Natural killer cell (primary cell): ENCODE measurements at regions of chr3 and their contacts with region 1.

Region 1: GRCh38 chr3:55343486-55344357 is 143.4 kb downstream of the WNT5A start:
- DNase-seq: no peak
- ATAC-seq: no peak
- H3K4me3 ChIP-seq: no peak overlapping the region
- H3K4me3 Mint-ChIP-seq: no peak overlapping the region
- H3K27ac ChIP-seq: no peak overlapping the region
- H3K27ac Mint-ChIP-seq: no peak overlapping the region
- H3K4me1 ChIP-seq: no peaks in the 10 kb centered on the region
- H3K4me1 Mint-ChIP-seq: no peaks in the 10 kb centered on the region
- H3K27me3 ChIP-seq: no peaks in the 10 kb centered on the region
- H3K27me3 Mint-ChIP-seq: no peaks in the 10 kb centered on the region
- CTCF ChIP-seq: no peak

Region 2: DNA sequence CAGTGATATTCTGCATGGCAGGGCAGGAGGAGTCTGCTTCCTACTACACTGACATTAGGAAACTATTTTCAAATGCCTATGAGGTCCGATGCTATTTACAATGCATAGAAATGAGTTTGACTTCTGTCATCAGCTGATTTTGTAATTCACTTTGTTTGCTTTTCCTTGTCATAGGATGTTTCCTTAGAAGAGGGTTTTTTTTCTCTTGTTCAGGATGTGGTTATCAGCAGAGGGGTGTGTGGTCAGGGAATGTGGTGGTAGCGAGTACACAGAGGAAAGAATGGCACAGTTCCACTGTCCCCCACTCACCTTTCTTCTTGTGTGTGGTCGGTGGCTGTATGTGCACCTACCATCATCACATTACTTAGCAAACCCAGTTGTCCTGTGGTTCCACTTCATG is 647.4 kb before region 1 on chr3:
- intact Hi-C with region 1: no loop called
- DNase-seq: no peak
- ATAC-seq: no peak
- H3K4me3 ChIP-seq: no peak overlapping the region
- H3K4me3 Mint-ChIP-seq: no peak overlapping the region
- H3K27ac ChIP-seq: no peak overlapping the region
- H3K27ac Mint-ChIP-seq: no peak overlapping the region
- H3K4me1 ChIP-seq: no peaks in the 10 kb centered on the region
- H3K4me1 Mint-ChIP-seq: no peaks in the 10 kb centered on the region
- H3K27me3 ChIP-seq: no peaks in the 10 kb centered on the region
- H3K27me3 Mint-ChIP-seq: no peaks in the 10 kb centered on the region
- CTCF ChIP-seq: no peak

Region 3: GRCh38 chr3:55305696-55306485 is 37.8 kb before region 1 on chr3:
- intact Hi-C with region 1: loop called (anchors 1 kb)
- DNase-seq: no peak
- ATAC-seq: no peak
- H3K4me3 ChIP-seq: no peak overlapping the region
- H3K4me3 Mint-ChIP-seq: no peak overlapping the region
- H3K27ac ChIP-seq: no peak overlapping the region
- H3K27ac Mint-ChIP-seq: no peak overlapping the region
- H3K4me1 ChIP-seq: no peaks in the 10 kb centered on the region
- H3K4me1 Mint-ChIP-seq: no peaks in the 10 kb centered on the region
- H3K27me3 ChIP-seq: no peaks in the 10 kb centered on the region
- H3K27me3 Mint-ChIP-seq: no peaks in the 10 kb centered on the region
- CTCF ChIP-seq: no peak

Region 4: DNA sequence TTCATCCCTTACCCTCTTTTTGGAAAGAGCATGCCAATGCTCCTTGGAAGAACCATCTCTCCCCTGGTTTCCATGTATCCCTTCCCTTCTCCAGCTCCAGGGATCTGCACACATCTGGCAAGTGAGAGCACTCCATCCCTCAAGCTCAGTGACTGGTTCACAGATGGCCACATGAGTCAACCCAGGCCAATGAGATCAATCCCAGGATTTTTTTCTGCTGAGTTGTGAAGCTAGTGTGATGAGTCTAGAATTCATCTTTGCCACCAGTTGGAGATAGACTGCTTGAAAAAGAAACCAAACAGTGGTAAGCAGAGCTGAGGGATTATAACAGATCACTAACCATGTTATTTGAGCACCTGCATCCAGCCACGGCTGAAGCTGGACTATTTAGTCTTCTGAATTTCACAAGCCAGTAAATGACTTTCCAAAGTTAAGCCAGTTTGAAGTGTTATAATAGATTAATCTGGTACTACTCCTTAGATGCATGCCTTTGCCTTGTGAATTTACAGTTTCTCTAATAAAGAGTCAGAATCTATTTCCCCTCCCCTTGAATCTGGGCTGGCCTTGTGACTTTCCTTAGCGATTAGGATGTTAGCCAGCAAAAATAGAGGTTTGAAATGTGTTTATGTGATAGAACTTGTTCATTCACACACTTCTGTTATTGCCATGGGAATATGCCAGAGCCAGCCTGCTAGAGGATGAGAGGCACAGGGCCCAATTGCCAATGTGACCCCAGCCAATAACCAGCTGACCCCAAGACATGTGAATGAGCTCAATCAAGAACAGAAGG is 16.4 kb before region 1 on chr3:
- intact Hi-C with region 1: no loop called
- DNase-seq: no peak
- ATAC-seq: no peak
- H3K4me3 ChIP-seq: no peak overlapping the region
- H3K4me3 Mint-ChIP-seq: no peak overlapping the region
- H3K27ac ChIP-seq: no peak overlapping the region
- H3K27ac Mint-ChIP-seq: no peak overlapping the region
- H3K4me1 ChIP-seq: no peaks in the 10 kb centered on the region
- H3K4me1 Mint-ChIP-seq: no peaks in the 10 kb centered on the region
- H3K27me3 ChIP-seq: no peaks in the 10 kb centered on the region
- H3K27me3 Mint-ChIP-seq: no peaks in the 10 kb centered on the region
- CTCF ChIP-seq: no peak

Region 5: GRCh38 chr3:57112206-57112605 is 1768.5 kb after region 1 on chr3:
- intact Hi-C with region 1: no loop called
- DNase-seq: no peak
- ATAC-seq: no peak
- H3K4me3 ChIP-seq: no peak overlapping the region
- H3K4me3 Mint-ChIP-seq: no peak overlapping the region
- H3K27ac ChIP-seq: no peak overlapping the region
- H3K27ac Mint-ChIP-seq: no peak overlapping the region
- H3K4me1 ChIP-seq: no peaks in the 10 kb centered on the region
- H3K4me1 Mint-ChIP-seq: peaks cover 0 to 5% of the 10 kb centered on the region in 2 donors
- H3K27me3 ChIP-seq: no peaks in the 10 kb centered on the region
- H3K27me3 Mint-ChIP-seq: peaks cover 0 to 3% of the 10 kb centered on the region in 2 donors
- CTCF ChIP-seq: no peak